Aorta (tissue), 5 donors: ENCODE measurements at regions of chr10 and their contacts with region 1.

Region 1: DNA sequence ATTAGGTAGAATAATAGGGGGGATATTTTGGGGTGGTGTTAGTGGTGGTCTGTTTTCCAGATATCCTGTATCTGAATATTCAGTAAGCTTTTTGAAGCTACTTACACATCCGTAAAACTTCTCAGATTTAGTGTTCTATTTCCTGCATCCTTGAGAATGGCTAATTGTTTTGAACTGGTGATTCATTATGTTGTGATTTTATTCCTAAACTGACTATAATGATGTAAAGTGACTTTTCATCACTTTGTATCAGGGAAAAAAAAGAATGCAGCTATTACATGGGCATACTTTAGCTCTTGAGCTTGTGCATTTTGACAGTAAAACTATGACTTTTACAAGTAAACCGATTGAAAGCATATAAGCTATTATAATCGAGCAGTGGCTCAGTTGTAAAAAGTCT is 18.2 kb downstream of the WAC start:
- DNase-seq: no peak
- ATAC-seq: no peak
- H3K4me3 ChIP-seq: no peak overlapping the region
- H3K27ac ChIP-seq: no peak overlapping the region
- H3K4me1 ChIP-seq: peaks cover 0 to 6% of the 10 kb centered on the region in 2 donors
- H3K27me3 ChIP-seq: no peaks in the 10 kb centered on the region

Region 2: GRCh38 chr10:28580825-28581224 is 29.7 kb after region 1 on chr10:
- intact Hi-C with region 1: no loop called
- DNase-seq: no peak
- ATAC-seq: no peak
- H3K4me3 ChIP-seq: no peak overlapping the region
- H3K27ac ChIP-seq: no peak overlapping the region
- H3K4me1 ChIP-seq: peaks cover 4 to 7% of the 10 kb centered on the region in 2 donors
- H3K27me3 ChIP-seq: no peaks in the 10 kb centered on the region

Region 3: GRCh38 chr10:28619455-28619854 is 68.4 kb after region 1 on chr10:
- intact Hi-C with region 1: loop called in 1 of 2 experiments (anchors 5 kb)
- DNase-seq: no peak
- ATAC-seq: no peak
- H3K4me3 ChIP-seq: no peak overlapping the region
- H3K27ac ChIP-seq: no peak overlapping the region
- H3K4me1 ChIP-seq: no peaks in the 10 kb centered on the region
- H3K27me3 ChIP-seq: no peaks in the 10 kb centered on the region

Region 4: DNA sequence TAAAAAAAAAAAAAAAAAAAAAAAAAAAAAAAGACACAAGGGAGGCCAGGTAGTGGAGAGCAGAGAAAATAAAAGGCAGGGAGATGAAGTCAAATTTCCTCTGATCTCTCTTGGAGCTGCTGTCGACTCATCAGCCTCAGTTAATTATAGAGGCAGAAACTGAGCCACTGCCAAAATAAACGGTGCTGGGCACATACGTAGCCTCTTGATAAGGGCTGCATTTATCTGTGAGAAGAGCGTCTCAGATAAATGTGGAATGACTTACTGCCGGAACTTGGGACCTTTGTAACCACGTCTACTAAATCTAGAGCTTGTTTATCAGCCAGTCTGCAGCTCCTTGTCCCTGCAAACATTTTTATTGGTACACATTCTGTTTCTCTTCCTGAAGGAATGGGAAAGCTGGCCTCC is 288.5 kb after region 1 on chr10:
- intact Hi-C with region 1: no loop called
- DNase-seq: no peak
- ATAC-seq: peak; percentile 27
- H3K4me3 ChIP-seq: no peak overlapping the region
- H3K27ac ChIP-seq: peak overlapping the region in 1 of 2 donors; percentile 14
- H3K4me1 ChIP-seq: peaks cover 5 to 6% of the 10 kb centered on the region in 2 donors
- H3K27me3 ChIP-seq: no peaks in the 10 kb centered on the region